ENCODE measurements at regions of chr12 and their contacts with region 1.

Region 1: GRCh38 chr12:12837025-12837872 is 24.1 kb downstream of the DDX47 start:
- DNase-seq: peak; percentile 74 to 85
- H3K4me3 ChIP-seq: no peak overlapping the region
- H3K27ac ChIP-seq: peak overlapping the region; percentile 99
- H3K4me1 ChIP-seq: peaks cover 97% of the 10 kb centered on the region
- H3K27me3 ChIP-seq: no peaks in the 10 kb centered on the region
- CTCF ChIP-seq: peak; percentile 80

Region 2: DNA sequence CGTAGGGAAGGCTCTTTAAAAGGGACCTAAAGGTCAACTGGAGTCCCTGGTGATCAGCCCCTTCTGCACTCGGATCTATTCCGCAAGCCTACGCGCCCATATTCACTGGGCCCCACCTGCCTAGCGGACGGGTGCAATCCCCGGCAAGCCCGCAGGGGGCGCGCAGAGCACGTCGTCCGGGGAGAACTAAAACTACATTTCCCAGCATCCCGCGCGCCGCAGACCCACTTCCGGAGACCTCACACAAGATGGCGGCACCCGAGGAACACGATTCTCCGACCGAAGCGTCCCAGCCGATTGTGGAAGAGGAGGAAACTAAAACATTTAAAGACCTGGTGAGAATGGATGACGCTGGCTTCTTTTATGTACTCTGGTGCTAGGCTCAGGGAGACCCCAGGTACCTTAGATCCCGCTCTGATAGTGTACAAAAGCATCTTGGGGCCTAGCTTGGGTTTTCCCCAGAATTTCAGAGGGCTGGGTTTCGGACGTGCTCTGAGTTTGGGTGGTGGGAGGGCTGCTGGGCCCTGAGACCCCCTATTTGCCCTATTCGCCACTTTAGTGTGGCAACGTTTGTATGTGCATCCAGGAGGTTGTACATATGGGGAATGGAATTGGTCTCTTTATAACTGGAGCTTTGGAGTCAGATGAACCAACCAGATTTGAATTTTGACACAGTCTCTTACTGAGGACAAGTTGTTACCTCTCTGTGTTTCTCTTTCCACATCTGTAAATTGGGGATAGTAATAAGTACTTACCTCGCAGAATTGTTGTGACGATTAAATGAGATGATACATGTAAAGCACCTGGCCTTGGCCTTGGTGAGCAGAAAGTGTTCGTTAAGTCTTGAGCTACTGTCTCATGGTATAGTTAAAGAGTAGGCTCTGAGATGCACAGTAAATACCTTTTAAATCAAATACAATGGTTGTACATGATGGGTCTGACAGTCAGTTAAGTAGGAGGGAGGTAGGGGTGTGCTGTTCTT is 23.8 kb before region 1 on chr12 and contains the start of gene DDX47:
- CTCF ChIA-PET with region 1: interaction called, 17 read pairs
- POLR2A ChIA-PET with region 1: interaction called, 6 read pairs
- intact Hi-C with region 1: loop called (anchors 1 kb)
- DNase-seq: peak; percentile 81 to 98
- H3K4me3 ChIP-seq: peak within 1 kb of the TSS; percentile 67
- H3K27ac ChIP-seq: peak within 1 kb of the TSS; percentile 81
- H3K4me1 ChIP-seq: peaks cover 64% of the 10 kb centered on the region
- H3K27me3 ChIP-seq: no peaks in the 10 kb centered on the region
- CTCF ChIP-seq: peak; percentile 93
- total RNA-seq, gene DDX47: 192 and 196 TPM in 2 replicates

Region 3: GRCh38 chr12:12872139-12872881 is 35.1 kb after region 1 on chr12:
- CTCF ChIA-PET with region 1: interaction called, 21 read pairs
- POLR2A ChIA-PET with region 1: interaction called, 42 read pairs
- intact Hi-C with region 1: loop called (anchors 1 kb)
- DNase-seq: peak; percentile 96 to 100
- H3K4me3 ChIP-seq: no peak overlapping the region
- H3K27ac ChIP-seq: peak overlapping the region; percentile 97
- H3K4me1 ChIP-seq: peaks cover 65% of the 10 kb centered on the region
- H3K27me3 ChIP-seq: no peaks in the 10 kb centered on the region
- CTCF ChIP-seq: no peak

Region 4: GRCh38 chr12:12899530-12900380 is 62.5 kb after region 1 on chr12:
- CTCF ChIA-PET with region 1: interaction called, 3 read pairs
- POLR2A ChIA-PET with region 1: interaction called, 6 read pairs
- intact Hi-C with region 1: loop called (anchors 2 kb)
- DNase-seq: peak in 1 of 2 experiments; percentile 65
- H3K4me3 ChIP-seq: peak overlapping the region; percentile 17; the same call in 1 of the 2 replicates
- H3K27ac ChIP-seq: peak overlapping the region; percentile 76
- H3K4me1 ChIP-seq: peaks cover 89% of the 10 kb centered on the region
- H3K27me3 ChIP-seq: no peaks in the 10 kb centered on the region
- CTCF ChIP-seq: no peak

Region 5: GRCh38 chr12:13114251-13115052 is 277.2 kb after region 1 on chr12:
- CTCF ChIA-PET with region 1: no interaction called
- POLR2A ChIA-PET with region 1: no interaction called
- intact Hi-C with region 1: no loop called
- DNase-seq: no peak
- H3K4me3 ChIP-seq: no peak overlapping the region
- H3K27ac ChIP-seq: no peak overlapping the region
- H3K4me1 ChIP-seq: peaks cover 15% of the 10 kb centered on the region
- H3K27me3 ChIP-seq: no peaks in the 10 kb centered on the region
- CTCF ChIP-seq: no peak

Measured in PC-9 (cell line).